PC-3 (cell line): ENCODE measurements at regions of chr18 and their contacts with region 1.

Region 1: GRCh38 chr18:79447703-79448367 is 52.1 kb downstream of the NFATC1 start:
- DNase-seq: peak; percentile 45
- ATAC-seq: peak; percentile 91
- H3K4me3 ChIP-seq: no peak overlapping the region
- H3K27ac ChIP-seq: no peak overlapping the region
- H3K4me1 ChIP-seq: peaks cover 7% of the 10 kb centered on the region
- H3K27me3 ChIP-seq: no peaks in the 10 kb centered on the region
- CTCF ChIP-seq: no peak

Region 2: GRCh38 chr18:79378542-79379250 is 69.1 kb before region 1 on chr18:
- CTCF ChIA-PET with region 1: no interaction called
- POLR2A ChIA-PET with region 1: no interaction called
- intact Hi-C with region 1: loop called (anchors 5 kb)
- DNase-seq: peak; percentile 76
- ATAC-seq: peak; percentile 80
- H3K4me3 ChIP-seq: 0 out of 2 replicates have a peak overlapping the region, but pooled peaks have one; percentile 22
- H3K27ac ChIP-seq: no peak overlapping the region
- H3K4me1 ChIP-seq: peaks cover 4% of the 10 kb centered on the region; the same call in 1 of the 2 replicates
- H3K27me3 ChIP-seq: no peaks in the 10 kb centered on the region
- CTCF ChIP-seq: peak; percentile 90